ENCODE measurements at regions of chr1 and their contacts with region 1.

Region 1: DNA sequence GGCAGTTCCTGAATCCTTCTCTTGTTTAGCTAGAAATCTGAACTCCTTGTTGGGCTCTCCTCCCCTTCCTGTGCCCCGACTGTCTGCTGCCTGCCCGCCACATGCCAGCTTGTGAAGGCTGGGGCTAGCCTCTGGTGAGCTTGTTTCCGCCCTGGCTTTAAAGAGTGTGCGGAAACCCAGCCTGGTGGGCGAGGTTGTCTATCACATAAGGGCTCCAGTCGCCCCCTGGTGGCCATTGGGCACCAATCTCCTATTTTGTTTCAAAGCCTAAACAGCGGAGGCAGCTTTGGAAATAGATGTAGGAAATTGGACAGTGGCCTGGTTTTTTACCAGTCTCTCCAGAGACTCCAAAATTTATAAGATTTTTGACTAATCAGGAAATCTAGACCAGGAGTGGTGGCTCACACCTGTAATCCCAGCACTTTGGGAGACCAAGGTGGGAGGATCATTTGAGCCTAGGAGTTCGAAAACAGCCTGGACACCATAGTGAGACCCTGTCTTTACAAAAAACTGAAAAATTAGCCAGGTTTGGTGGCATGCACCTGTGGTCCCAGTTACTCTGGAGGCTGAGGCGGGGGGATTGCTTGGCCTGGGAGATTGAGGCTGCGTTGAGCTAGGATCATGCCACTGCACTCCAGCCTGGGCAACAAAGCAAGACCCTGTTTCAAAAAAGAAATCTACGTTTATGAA is 9.8 kb downstream of the ATP8B2 start:
- DNase-seq: peak; percentile 86
- ATAC-seq: peak; percentile 95
- H3K4me3 Mint-ChIP-seq: no peak overlapping the region
- H3K27ac Mint-ChIP-seq: 0 out of 2 replicates have a peak overlapping the region, but pooled peaks have one; percentile 85
- H3K4me1 Mint-ChIP-seq: no peaks in the 10 kb centered on the region
- H3K27me3 Mint-ChIP-seq: no peaks in the 10 kb centered on the region
- CTCF ChIP-seq: peak; percentile 88

Region 2: DNA sequence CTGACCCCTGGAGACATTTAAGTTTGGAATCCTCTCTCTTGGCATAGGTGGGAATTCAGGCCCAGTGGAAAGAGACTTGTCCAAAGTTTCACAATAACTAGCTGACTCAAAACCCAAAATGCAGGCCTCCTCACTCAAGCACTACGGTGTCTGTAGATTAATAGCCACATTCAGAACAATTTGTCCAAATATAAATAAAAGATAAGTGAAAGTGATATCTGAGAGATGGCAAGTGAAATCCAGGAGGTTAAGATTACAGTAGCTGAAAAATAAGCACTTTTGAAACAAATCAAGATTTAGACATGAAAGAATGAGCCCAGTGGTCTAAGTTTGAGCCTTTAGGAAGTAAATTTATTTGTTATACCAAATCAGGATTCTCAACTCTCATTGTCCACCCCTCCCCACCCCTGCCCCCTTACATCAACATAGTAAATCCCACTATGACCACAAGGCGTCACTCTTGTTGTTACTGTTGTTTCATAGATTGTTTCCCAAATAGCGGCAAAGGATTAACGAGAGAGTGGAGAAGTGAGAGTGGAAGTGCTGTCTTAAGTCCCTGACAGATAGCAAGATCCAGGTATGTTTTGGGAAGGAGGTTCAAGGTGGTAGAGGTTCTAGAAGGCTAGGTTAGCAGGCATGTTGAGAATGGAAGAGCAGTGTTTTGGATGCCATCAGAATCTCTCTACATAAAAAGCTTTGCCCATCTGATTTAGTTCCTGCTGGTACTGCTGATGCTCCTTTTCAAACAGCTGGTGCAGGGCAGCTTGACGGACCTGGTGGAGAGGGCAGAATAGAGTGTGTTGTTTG is 136.2 kb before region 1 on chr1:
- CTCF ChIA-PET with region 1: interaction called, 17 read pairs
- POLR2A ChIA-PET with region 1: no interaction called
- DNase-seq: peak; percentile 23
- ATAC-seq: peak; percentile 88
- H3K4me3 Mint-ChIP-seq: no peak overlapping the region
- H3K27ac Mint-ChIP-seq: no peak overlapping the region
- H3K4me1 Mint-ChIP-seq: peaks cover 2% of the 10 kb centered on the region; the same call in 1 of the 2 replicates
- H3K27me3 Mint-ChIP-seq: peaks cover 3% of the 10 kb centered on the region; the same call in 1 of the 2 replicates
- CTCF ChIP-seq: 0 out of 2 replicates have a peak, but pooled peaks have one; percentile 26

Region 3: GRCh38 chr1:154290921-154291320 is 44.2 kb before region 1 on chr1:
- CTCF ChIA-PET with region 1: interaction called, 12 read pairs
- POLR2A ChIA-PET with region 1: no interaction called
- DNase-seq: no peak
- ATAC-seq: no peak
- H3K4me3 Mint-ChIP-seq: no peak overlapping the region
- H3K27ac Mint-ChIP-seq: no peak overlapping the region
- H3K4me1 Mint-ChIP-seq: 0 out of 2 replicates have a peak, but pooled peaks cover 2% of the 10 kb centered on the region
- H3K27me3 Mint-ChIP-seq: peaks cover 14% of the 10 kb centered on the region; the same call in 1 of the 2 replicates
- CTCF ChIP-seq: no peak

Region 4: GRCh38 chr1:154324669-154325582 is 10.2 kb before region 1 on chr1 and contains the start of gene ATP8B2:
- CTCF ChIA-PET with region 1: interaction called, 168 read pairs
- POLR2A ChIA-PET with region 1: interaction called, 7 read pairs
- DNase-seq: peak; percentile 90
- ATAC-seq: peak; percentile 62
- H3K4me3 Mint-ChIP-seq: peak within 1 kb of the TSS; percentile 95
- H3K27ac Mint-ChIP-seq: peak within 1 kb of the TSS; percentile 92
- H3K4me1 Mint-ChIP-seq: peaks cover 31% of the 10 kb centered on the region
- H3K27me3 Mint-ChIP-seq: peaks cover 4% of the 10 kb centered on the region
- CTCF ChIP-seq: peak; percentile 98
- total RNA-seq, gene ATP8B2: 38.8 to 50.0 TPM (median 40.8 TPM) in 3 replicates

Region 5: GRCh38 chr1:154352581-154353459 is 17.6 kb after region 1 on chr1:
- CTCF ChIA-PET with region 1: interaction called, 29 read pairs
- POLR2A ChIA-PET with region 1: no interaction called
- DNase-seq: peak; percentile 73
- ATAC-seq: peak; percentile 69
- H3K4me3 Mint-ChIP-seq: peak overlapping the region; percentile 87
- H3K27ac Mint-ChIP-seq: no peak overlapping the region; the same call in none of the 2 replicates
- H3K4me1 Mint-ChIP-seq: peaks cover 13% of the 10 kb centered on the region
- H3K27me3 Mint-ChIP-seq: peaks cover 22% of the 10 kb centered on the region
- CTCF ChIP-seq: no peak